GM12878 (cell line): ENCODE measurements at regions of chr1 and their contacts with region 1.

Region 1: GRCh38 chr1:56831871-56832693 is 12.9 kb upstream of the FYB2 start:
- DNase-seq: peak; percentile 11
- ATAC-seq: peak; percentile 81
- H3K4me3 ChIP-seq: no peak overlapping the region
- H3K27ac ChIP-seq: no peak overlapping the region
- H3K4me1 ChIP-seq: no peaks in the 10 kb centered on the region
- H3K27me3 ChIP-seq: no peaks in the 10 kb centered on the region; a peak in 1 of 4 replicates
- CTCF ChIP-seq: peak; percentile 84 to 93 (median 91)
- EP300 ChIP-seq: no peak
- POLR2A ChIP-seq: no peak
- RAD21 ChIP-seq: peak; percentile 99

Region 2: DNA sequence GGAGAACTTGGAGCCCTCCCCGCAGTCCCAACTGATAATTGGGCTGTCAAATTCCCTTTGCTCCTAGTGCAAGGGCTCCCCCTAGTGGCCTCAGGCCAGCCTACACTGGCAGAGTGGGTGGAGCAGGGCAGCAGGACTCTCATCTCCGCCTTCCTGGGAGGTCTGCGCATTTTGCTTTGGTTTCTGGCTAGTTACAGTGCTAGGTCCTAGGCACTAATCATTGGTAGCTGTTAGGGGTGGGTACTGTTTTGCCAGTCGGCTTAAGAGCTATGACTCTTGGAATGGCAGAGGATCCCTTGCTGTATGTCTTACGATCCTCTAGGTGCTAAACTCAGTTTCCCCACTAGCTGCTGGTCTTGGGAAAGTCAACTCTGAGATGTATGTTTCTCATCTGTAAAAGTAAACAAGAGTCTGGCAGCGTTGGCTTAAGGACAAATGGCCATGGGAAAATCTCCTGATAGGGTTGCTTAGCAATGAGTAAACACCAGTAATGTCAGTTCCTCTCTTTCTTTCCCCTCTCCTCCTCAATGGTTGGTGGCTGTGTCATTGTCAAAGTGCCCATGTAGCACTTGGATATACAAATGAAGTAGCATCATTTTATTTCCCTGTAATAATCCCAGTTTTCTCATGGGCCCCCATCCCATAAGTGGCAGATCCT is 10.8 kb before region 1 on chr1:
- CTCF ChIA-PET with region 1: interaction called, 20 read pairs
- POLR2A ChIA-PET with region 1: no interaction called
- RAD21 ChIA-PET with region 1: no interaction called
- SMC1A ChIA-PET with region 1: interaction called, 3 read pairs
- in situ Hi-C with region 1: no loop called
- intact Hi-C with region 1: no loop called
- DNase-seq: no peak
- ATAC-seq: peak; percentile 82
- H3K4me3 ChIP-seq: no peak overlapping the region
- H3K27ac ChIP-seq: no peak overlapping the region
- H3K4me1 ChIP-seq: no peaks in the 10 kb centered on the region
- H3K27me3 ChIP-seq: peaks cover 0 to 1% of the 10 kb centered on the region in 2 experiments; a peak in 2 of 4 replicates
- CTCF ChIP-seq: peak; percentile 68 to 95 (median 95)
- EP300 ChIP-seq: no peak
- POLR2A ChIP-seq: no peak
- RAD21 ChIP-seq: peak; percentile 76

Region 3: GRCh38 chr1:56843544-56843943 is 11.5 kb after region 1 on chr1:
- CTCF ChIA-PET with region 1: interaction called, 10 read pairs
- POLR2A ChIA-PET with region 1: no interaction called
- RAD21 ChIA-PET with region 1: interaction called, 4 read pairs
- SMC1A ChIA-PET with region 1: interaction called, 3 read pairs
- in situ Hi-C with region 1: no loop called
- intact Hi-C with region 1: no loop called
- DNase-seq: no peak
- ATAC-seq: no peak
- H3K4me3 ChIP-seq: no peak overlapping the region
- H3K27ac ChIP-seq: no peak overlapping the region
- H3K4me1 ChIP-seq: no peaks in the 10 kb centered on the region
- H3K27me3 ChIP-seq: no peaks in the 10 kb centered on the region
- CTCF ChIP-seq: no peak
- EP300 ChIP-seq: no peak
- POLR2A ChIP-seq: no peak
- RAD21 ChIP-seq: no peak

Region 4: DNA sequence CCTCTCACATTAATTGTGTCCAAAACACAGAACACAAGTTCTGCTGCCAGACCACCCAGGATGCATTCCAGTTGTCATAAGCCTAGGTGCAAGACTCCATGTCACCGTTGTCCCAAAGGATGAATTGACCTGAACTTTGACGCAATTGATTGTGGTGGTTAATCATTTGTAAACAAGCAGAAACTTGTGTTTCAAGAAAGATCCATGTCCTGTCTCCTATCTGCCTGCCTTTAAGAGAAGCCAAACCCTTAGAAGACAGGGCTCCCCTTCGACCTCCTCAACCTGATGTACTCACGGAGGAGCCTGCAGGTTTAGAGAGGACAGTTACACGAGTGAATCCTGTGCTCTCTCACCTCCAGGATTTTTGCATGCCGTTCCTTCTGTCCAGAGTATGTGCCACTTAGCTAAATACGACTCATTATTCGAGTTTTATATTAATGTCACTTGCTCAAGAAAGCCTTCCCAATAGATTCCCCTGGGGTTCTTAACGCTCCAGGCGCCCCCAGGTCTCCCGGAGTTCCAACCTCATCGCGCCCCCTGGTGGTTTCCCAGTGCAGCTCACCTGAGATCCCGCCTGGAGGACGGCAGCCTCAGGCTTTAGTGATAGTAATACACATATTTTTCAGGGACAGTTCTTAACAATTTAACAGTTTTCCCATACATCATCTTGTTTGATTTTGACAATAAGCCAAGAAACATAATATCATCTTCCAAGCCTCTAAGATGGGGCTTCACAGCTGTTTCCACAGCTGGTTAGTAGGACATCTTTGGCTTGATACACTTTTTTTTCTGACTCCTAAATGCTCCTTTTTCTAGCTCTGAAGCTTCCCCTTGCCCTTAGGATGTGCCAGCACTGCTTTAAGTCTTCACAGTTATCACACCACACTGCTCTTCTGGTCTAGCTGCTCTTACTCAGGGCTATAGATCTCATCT is 136.1 kb after region 1 on chr1:
- CTCF ChIA-PET with region 1: interaction called, 35 read pairs
- POLR2A ChIA-PET with region 1: no interaction called
- RAD21 ChIA-PET with region 1: interaction called, 5 read pairs
- SMC1A ChIA-PET with region 1: interaction called, 16 read pairs
- in situ Hi-C with region 1: no loop called
- intact Hi-C with region 1: loop called (anchors 2 kb)
- DNase-seq: no peak
- ATAC-seq: no peak
- H3K4me3 ChIP-seq: no peak overlapping the region
- H3K27ac ChIP-seq: no peak overlapping the region
- H3K4me1 ChIP-seq: no peaks in the 10 kb centered on the region
- H3K27me3 ChIP-seq: no peaks in the 10 kb centered on the region
- CTCF ChIP-seq: peak in 2 of 3 experiments; percentile 38 to 41; a peak in 5 of 6 replicates
- EP300 ChIP-seq: no peak
- POLR2A ChIP-seq: no peak
- RAD21 ChIP-seq: no peak

Region 5: GRCh38 chr1:58047265-58047858 is 1215.3 kb after region 1 on chr1:
- CTCF ChIA-PET with region 1: interaction called, 8 read pairs
- POLR2A ChIA-PET with region 1: no interaction called
- RAD21 ChIA-PET with region 1: no interaction called
- SMC1A ChIA-PET with region 1: no interaction called
- in situ Hi-C with region 1: loop called (anchors 5 kb)
- intact Hi-C with region 1: loop called (anchors 1 kb)
- DNase-seq: no peak
- ATAC-seq: peak; percentile 88
- H3K4me3 ChIP-seq: no peak overlapping the region
- H3K27ac ChIP-seq: no peak overlapping the region
- H3K4me1 ChIP-seq: no peaks in the 10 kb centered on the region
- H3K27me3 ChIP-seq: no peaks in the 10 kb centered on the region; a peak in 1 of 4 replicates
- CTCF ChIP-seq: peak; percentile 60 to 80 (median 70)
- EP300 ChIP-seq: no peak
- POLR2A ChIP-seq: no peak
- RAD21 ChIP-seq: peak; percentile 62

Region 6: GRCh38 chr1:58546520-58547308 is 1714.6 kb after region 1 on chr1 and contains the start of gene OMA1:
- CTCF ChIA-PET with region 1: no interaction called
- POLR2A ChIA-PET with region 1: no interaction called
- RAD21 ChIA-PET with region 1: interaction called, 4 read pairs
- SMC1A ChIA-PET with region 1: interaction called, 3 read pairs
- in situ Hi-C with region 1: loop called (anchors 25 kb)
- intact Hi-C with region 1: loop called (anchors 5 kb)
- DNase-seq: peak; percentile 83
- ATAC-seq: peak; percentile 97
- H3K4me3 ChIP-seq: peak within 1 kb of the TSS; percentile 93
- H3K27ac ChIP-seq: peak within 1 kb of the TSS; percentile 67
- H3K4me1 ChIP-seq: no peaks in the 10 kb centered on the region
- H3K27me3 ChIP-seq: no peaks in the 10 kb centered on the region
- CTCF ChIP-seq: peak; percentile 98 to 99 (median 98); a peak in 5 of 6 replicates
- EP300 ChIP-seq: no peak
- POLR2A ChIP-seq: peak; percentile 98
- RAD21 ChIP-seq: peak; percentile 94
- polyA plus RNA-seq, gene OMA1: 48.3 to 53.4 TPM

Region 7: DNA sequence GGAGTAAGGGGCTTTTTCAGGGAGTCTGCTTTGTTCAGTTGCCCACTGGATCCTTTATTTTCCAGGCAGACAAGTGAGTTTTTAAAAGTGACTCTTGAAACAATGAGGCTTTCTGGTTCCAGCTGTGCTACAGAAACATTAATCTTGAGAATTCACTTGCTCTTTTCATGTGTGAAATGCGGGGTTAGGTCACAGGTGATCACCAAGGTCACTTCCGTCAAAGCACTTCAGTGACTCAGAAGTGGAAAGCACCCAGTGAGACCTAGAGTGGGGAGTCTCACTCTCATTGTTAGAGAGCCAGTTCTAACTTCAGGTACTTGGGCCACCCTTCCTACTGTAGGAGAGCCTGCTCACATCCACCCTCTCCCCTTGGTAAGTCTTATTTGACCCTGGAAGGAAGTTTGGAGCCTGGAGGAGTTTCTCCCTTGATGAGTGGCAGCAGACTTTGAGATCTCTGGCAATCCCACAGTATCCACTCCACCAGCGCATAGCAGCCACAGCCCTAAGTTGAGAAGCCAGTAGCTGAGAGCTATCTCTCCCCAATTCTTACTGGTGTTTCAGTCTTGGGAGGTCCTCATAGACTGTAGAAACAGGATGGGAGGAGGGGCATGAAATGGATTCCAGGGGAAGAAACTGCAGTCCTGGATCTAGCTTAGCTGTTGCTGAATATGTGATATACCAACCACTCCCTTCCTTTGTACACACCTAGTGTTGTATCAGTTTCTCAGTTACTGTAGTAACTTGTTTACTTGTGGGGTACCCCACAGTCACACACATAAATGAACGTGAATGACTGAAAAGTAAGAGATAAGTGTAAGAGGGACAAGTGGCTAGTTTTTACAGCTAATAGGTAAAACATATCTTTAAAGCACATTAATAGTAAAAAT is 1741.9 kb after region 1 on chr1:
- CTCF ChIA-PET with region 1: no interaction called
- POLR2A ChIA-PET with region 1: no interaction called
- RAD21 ChIA-PET with region 1: no interaction called
- SMC1A ChIA-PET with region 1: no interaction called
- in situ Hi-C with region 1: loop called (anchors 25 kb)
- intact Hi-C with region 1: no loop called
- DNase-seq: peak; percentile 93
- ATAC-seq: peak; percentile 95
- H3K4me3 ChIP-seq: 0 out of 2 replicates have a peak overlapping the region, but pooled peaks have one; percentile 6
- H3K27ac ChIP-seq: peak overlapping the region; percentile 72
- H3K4me1 ChIP-seq: peaks cover 44% of the 10 kb centered on the region
- H3K27me3 ChIP-seq: no peaks in the 10 kb centered on the region
- CTCF ChIP-seq: no peak
- EP300 ChIP-seq: peak; percentile 95 to 98
- POLR2A ChIP-seq: peak; percentile 70
- RAD21 ChIP-seq: peak; percentile 20; the same call in 1 of the 2 replicates